ENCODE measurements at regions of chr6 and their contacts with region 1.

Region 1: GRCh38 chr6:106804346-106805335 is 169.9 kb downstream of the CD24 start:
- DNase-seq: peak in 1 of 6 donors; percentile 25
- ATAC-seq: peak in 3 of 4 donors; percentile 14 to 40 (median 36)
- H3K4me3 ChIP-seq: no peak overlapping the region
- H3K27ac ChIP-seq: peak overlapping the region in 3 of 4 donors; percentile 10 to 40 (median 20)
- H3K4me1 ChIP-seq: peaks cover 14 to 34% (median 22%) of the 10 kb centered on the region in 3 donors
- H3K27me3 ChIP-seq: no peaks in the 10 kb centered on the region
- CTCF ChIP-seq: no peak

Region 2: DNA sequence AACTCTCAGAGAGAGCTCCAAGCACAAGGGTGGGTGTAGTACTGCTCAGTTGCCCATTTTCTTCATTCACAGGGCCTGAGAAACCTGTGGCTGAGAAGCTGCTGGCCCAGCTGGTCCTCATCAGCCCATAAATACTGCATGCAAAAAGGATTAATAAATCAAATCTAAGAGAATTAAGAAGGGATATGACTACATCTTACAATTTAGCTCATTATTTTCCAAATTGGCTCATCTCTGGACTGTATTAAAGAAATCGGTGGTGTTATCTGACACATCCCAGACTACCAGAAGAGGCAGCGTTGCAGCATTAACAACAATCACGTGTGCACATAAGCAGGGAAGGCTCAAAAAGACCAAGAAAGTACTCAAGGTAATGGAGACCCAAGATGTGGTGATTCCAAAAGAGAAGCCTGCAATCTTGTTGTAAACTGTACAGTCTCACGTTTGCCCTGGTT is 79.2 kb after region 1 on chr6:
- intact Hi-C with region 1: loop called in 1 of 3 experiments (anchors 10 kb)
- DNase-seq: no peak
- ATAC-seq: no peak
- H3K4me3 ChIP-seq: no peak overlapping the region
- H3K27ac ChIP-seq: peak overlapping the region in 1 of 4 donors; percentile 74
- H3K4me1 ChIP-seq: peaks cover 10 to 40% (median 17%) of the 10 kb centered on the region in 3 donors
- H3K27me3 ChIP-seq: no peaks in the 10 kb centered on the region
- CTCF ChIP-seq: no peak